Heart left ventricle (tissue), 16 donors: ENCODE measurements at regions of chr17 and their contacts with region 1.

Region 1: DNA sequence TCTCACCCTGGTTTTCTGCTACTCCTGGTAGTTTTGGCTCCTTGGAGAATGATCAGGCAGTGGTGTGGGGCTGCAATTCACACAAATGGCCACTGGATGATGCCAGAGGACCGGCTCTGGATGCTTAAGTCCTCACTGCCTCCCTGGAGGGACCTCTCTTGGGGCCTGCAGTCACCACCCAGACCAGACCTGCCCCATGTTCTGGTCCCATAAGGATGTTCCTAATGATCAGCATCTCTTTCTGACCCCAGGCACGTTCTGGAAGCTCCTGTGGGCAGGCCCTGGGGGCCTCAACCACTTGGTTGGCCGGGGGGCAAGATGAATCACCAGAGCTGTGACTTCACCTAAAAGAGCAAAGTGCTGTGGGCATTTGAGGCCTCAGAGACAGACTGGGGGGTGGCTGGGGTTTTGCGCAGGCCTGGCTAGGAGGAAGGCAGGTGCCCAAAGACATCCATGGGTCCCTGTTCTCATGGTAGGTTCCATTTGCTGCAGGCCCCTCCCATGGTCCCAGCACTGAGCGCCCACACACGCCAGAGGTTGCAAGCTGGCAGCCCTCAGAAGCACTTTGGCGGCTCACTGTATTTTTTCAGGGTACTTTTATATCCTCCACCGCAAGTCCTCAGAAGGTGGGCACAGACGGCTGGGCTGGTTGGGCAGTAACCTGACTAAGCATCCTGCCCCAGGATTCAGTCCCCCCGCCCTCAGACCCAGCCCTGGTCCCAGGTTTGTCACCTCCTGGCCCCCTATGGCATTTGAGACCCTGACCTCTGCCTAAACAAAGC is 53.2 kb downstream of the NT5M start:
- DNase-seq: peak; percentile 73 to 83 (median 74)
- ATAC-seq: peak; percentile 61 to 78 (median 70)
- H3K4me3 ChIP-seq: no peak overlapping the region
- H3K27ac ChIP-seq: no peak overlapping the region
- H3K4me1 ChIP-seq: peaks cover 0 to 27% (median 12%) of the 10 kb centered on the region in 12 donors
- H3K27me3 ChIP-seq: no peaks in the 10 kb centered on the region
- CTCF ChIP-seq: peak; percentile 94 to 100 (median 98)
- POLR2A ChIP-seq: no peak

Region 2: GRCh38 chr17:17416007-17416399 is 59.7 kb after region 1 on chr17:
- intact Hi-C with region 1: loop called in 3 of 10 experiments (anchors 5 kb)
- DNase-seq: no peak
- ATAC-seq: peak in 2 of 4 donors; percentile 16 to 41
- H3K4me3 ChIP-seq: no peak overlapping the region
- H3K27ac ChIP-seq: peak overlapping the region; percentile 19 to 82 (median 74)
- H3K4me1 ChIP-seq: peaks cover 0 to 63% (median 33%) of the 10 kb centered on the region in 12 donors
- H3K27me3 ChIP-seq: no peaks in the 10 kb centered on the region
- CTCF ChIP-seq: no peak
- POLR2A ChIP-seq: no peak

Region 3: GRCh38 chr17:17476865-17477467 is 120.6 kb after region 1 on chr17 and contains the start of gene MED9:
- intact Hi-C with region 1: loop called in 1 of 10 experiments (anchors 5 kb)
- DNase-seq: peak; percentile 93 to 97 (median 95)
- ATAC-seq: peak; percentile 95 to 99 (median 99)
- H3K4me3 ChIP-seq: peak within 1 kb of the TSS; percentile 63 to 98 (median 84)
- H3K27ac ChIP-seq: peak within 1 kb of the TSS; percentile 90 to 98 (median 94)
- H3K4me1 ChIP-seq: peaks cover 0 to 52% (median 41%) of the 10 kb centered on the region in 12 donors
- H3K27me3 ChIP-seq: no peaks in the 10 kb centered on the region
- CTCF ChIP-seq: no peak
- POLR2A ChIP-seq: peak; percentile 29 to 77
- total RNA-seq, gene MED9: 26.3 to 64.4 (median 33.0) TPM

Region 4: DNA sequence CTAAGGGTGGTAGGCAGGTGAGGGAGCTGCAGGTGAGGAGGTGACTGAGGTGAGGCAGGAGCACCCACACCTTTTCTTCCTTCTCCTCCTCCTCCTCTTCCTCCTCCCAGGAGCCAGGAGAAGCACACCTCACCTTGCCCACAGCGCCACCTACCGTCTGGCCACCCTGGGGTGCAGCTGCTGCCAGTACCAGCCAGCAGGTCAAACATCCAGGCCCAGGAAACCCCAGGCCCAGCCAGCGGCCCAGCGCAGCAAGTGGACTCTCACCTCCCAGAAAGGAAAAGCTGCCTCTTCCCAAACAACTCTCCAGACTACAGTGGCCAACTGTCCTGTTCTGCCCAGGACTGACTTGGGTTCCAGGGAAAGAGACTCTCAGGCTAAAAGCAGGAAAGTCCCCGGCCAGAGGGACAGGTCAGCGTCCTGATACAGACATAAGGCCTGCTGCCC is 212.4 kb after region 1 on chr17:
- intact Hi-C with region 1: loop called (anchors 1 to 5 kb)
- DNase-seq: peak; percentile 70 to 88 (median 83)
- ATAC-seq: peak in 2 of 4 donors; percentile 48 to 57
- H3K4me3 ChIP-seq: no peak overlapping the region
- H3K27ac ChIP-seq: peak overlapping the region in 8 of 12 donors; percentile 29 to 99 (median 88)
- H3K4me1 ChIP-seq: peaks cover 3 to 72% (median 51%) of the 10 kb centered on the region in 12 donors
- H3K27me3 ChIP-seq: no peaks in the 10 kb centered on the region
- CTCF ChIP-seq: peak; percentile 50 to 78 (median 65)
- POLR2A ChIP-seq: no peak

Region 5: DNA sequence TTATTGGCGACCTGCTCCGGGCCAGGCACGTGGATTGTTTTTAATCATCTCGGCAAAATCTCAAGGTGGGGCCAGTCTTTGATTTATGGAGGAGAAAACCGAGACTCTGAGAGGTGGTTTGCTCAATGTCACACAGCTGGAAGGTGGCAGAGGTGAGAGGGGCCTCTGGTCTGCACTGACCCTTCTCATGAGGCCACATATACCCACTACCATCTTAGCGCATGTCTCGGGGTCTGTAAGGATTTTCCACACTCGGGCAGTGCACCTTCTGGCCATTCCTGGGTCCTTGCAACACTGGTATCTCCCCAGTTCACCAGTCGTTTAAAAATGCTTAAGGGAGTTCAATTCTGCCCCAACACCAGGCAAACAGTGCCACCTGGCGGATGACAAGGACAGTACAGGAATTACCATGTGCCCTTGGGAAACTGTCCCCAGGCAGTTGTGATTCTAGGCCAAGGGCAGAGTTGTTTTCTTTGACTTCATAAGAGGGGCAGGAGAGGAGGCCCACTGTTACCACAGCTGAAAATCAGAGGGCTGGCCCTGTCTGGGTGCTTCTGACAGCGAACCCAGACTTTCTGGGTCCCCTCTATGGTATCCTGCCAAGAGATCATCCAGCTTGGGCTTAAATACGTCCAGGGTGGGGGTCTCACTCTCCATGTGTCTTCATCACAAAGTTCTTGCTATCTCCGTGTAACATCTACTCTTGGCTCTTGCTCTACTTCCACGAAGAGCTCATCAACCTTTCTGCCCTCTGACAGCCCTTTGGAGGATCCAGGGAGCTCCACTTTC is 285.5 kb after region 1 on chr17:
- intact Hi-C with region 1: loop called (anchors 1 to 2 kb)
- DNase-seq: peak; percentile 70 to 85 (median 76)
- ATAC-seq: peak; percentile 69 to 91 (median 90)
- H3K4me3 ChIP-seq: no peak overlapping the region
- H3K27ac ChIP-seq: peak overlapping the region in 1 of 12 donors; percentile 23
- H3K4me1 ChIP-seq: peaks cover 0 to 13% (median 0%) of the 10 kb centered on the region in 12 donors
- H3K27me3 ChIP-seq: no peaks in the 10 kb centered on the region
- CTCF ChIP-seq: peak; percentile 80 to 94 (median 88)
- POLR2A ChIP-seq: no peak